ENCODE measurements at regions of chr11 and their contacts with region 1.

Region 1: DNA sequence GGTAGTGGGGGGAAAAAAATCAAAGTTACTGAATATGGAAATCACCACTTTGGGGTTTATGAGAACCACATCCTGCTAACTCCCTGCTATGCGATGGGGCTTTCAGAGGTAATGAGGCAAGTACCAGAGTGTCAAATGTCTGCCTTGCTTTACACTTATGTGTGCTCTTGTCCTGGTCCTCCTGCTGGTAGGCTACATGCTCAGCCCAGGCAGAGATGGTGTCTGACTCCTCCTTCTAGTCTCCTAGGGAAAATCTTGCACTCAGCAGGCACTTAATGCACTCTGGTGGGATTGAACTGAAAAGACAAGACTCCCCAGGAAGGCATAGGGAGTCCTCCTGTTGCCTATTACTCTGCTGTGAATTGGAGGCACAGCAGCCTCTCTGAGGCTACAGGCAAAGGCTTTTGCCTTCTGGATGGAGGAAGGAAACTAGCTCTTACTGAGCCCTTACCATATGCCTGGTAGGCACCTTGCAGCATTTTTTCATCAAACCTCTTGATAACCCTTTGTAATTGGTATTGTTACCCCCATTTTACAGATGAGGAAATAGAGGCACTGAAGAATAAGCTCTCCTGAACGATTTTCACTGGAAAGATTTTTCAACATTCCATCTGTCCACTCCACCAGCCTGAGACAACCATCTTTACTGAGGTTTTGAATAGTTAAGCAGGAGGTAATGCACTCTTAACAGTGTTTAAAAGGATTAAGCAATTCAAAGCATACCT is 132.1 kb upstream of the PAX6 start:
- DNase-seq: peak; percentile 25
- CTCF ChIP-seq: no peak

Region 2: DNA sequence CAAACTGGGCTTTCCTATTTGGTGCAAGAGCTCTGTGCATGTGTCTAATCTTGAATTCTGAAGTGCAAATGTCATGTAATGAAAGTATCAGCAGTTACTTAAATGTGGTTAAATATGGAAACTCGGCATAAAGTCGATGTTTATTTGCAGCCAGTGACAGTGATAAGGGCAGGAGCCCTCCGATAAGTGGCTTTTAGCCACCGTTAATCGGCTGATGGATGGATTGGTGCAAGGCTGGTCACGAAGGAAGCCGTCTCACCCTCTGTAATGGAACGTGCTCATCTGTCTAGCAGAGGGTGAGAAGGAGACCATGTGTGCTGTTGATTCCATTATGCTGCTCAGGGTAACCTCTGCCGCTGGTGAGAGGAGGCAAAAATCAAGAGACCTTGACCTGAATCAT is 10.3 kb before region 1 on chr11:
- CTCF ChIA-PET with region 1: interaction called, 13 read pairs
- POLR2A ChIA-PET with region 1: no interaction called
- DNase-seq: no peak
- CTCF ChIP-seq: no peak

Measured in GM10248 (cell line).